ENCODE measurements at regions of chr3 and their contacts with region 1.

Region 1: DNA sequence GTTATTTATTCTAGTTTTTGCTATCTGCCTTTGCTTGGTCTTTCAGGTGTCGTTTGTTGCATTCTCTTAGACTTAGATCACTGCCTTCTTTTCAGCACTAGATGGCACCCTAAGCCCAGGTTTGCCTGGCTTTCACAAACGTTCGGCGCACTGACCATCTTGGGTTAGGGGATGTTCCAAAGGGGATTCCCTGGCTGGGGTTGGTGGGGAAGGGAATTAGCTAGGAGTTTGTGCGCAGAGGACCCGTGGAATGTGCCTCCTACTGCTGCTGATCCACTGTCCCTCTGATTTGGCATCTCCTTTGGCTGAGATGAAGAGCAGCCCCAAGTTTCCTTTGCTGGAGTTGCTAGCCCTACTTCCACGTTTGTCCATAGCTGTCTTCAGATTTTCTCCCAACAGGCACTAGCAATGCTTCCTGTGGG is 33.9 kb downstream of the PFN2 start:
- DNase-seq: no peak
- H3K4me3 ChIP-seq: no peak overlapping the region
- H3K27ac ChIP-seq: no peak overlapping the region
- H3K27me3 ChIP-seq: no peaks in the 10 kb centered on the region
- CTCF ChIP-seq: peak; percentile 84

Region 2: GRCh38 chr3:149958171-149958796 is 21.5 kb after region 1 on chr3:
- CTCF ChIA-PET with region 1: interaction called, 20 read pairs
- POLR2A ChIA-PET with region 1: no interaction called
- DNase-seq: no peak
- H3K4me3 ChIP-seq: no peak overlapping the region
- H3K27ac ChIP-seq: no peak overlapping the region
- H3K27me3 ChIP-seq: no peaks in the 10 kb centered on the region
- CTCF ChIP-seq: no peak

Region 3: DNA sequence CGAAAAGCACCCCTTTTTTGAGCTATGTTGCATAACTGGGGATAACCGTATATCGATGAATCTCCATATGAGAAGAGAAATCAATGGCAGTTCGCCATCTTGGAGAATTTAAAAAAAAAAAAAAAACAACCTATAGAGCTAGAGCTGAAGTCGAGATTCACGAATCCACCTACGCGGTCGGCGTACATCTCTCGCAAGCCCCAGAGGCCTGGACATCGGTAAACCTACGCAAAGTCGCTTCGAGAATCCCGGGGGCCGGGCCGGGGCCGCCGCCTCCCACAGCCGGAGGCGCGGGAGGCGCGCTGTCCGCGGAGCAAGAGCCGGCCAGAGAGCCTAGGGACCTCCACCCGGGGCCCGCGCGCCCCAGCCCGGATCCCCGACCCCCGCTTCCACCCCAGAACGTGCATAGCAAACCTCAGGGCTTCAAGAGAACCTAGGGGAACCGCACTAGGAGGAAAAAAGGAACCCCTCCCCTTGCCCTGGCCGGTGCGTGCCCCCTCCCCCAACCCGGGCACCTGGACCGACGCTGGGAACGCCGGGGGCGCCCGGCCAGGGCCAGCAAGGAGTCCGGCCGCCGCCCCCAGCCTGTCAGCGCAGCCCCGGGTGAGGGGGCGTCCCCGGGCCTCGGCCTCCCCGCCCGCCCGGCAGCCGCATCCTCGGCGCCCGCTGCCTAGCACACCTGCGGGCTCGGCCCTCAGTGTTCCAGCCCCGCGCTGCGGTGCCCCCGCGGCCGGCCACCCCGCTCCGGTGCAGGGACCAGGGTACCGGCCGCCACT is 33.3 kb after region 1 on chr3:
- CTCF ChIA-PET with region 1: interaction called, 36 read pairs
- POLR2A ChIA-PET with region 1: no interaction called
- DNase-seq: peak; percentile 72
- H3K4me3 ChIP-seq: peak overlapping the region; percentile 78
- H3K27ac ChIP-seq: peak overlapping the region; percentile 80
- H3K27me3 ChIP-seq: no peaks in the 10 kb centered on the region
- CTCF ChIP-seq: no peak

Region 4: DNA sequence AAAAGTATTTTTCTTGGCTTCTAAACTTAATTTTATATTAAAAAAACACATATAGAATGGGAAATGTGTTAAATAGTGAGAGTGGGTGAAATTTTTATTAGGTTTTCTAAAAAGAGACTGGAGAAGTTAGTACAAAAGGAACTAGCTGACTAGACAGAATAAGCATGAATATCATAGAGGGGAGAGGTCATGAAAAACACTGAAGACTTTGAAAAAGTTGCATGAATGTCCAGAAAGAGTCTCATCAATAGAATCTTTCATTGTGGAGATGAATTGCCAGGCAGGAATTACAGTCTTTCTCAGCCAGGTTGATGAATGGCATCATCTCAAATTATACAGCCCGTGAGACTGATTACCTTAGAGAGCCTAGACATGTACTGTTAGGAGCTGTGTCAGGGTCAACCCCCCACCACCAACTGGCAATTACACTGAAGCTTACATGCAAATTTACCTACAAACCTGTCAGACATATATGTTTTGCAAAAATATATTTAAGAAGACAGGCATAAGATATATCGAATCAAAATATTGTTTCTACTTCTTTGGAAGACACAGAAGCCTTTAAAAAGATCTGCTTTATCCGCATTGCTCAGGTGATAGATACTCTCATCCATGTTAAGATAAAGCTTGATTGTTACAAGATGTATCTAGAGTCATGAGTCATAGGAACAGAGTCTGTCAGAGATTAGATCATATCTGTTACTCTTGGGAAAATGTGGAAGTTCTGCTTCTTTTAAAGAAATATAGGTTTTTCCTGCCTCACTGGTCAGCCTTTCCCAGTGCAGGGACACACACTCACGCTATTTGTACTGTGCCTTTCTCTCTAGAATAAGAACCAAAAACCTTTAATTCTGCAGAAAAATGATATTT is 68.7 kb after region 1 on chr3:
- CTCF ChIA-PET with region 1: no interaction called
- POLR2A ChIA-PET with region 1: no interaction called
- DNase-seq: no peak
- H3K4me3 ChIP-seq: no peak overlapping the region
- H3K27ac ChIP-seq: no peak overlapping the region
- H3K27me3 ChIP-seq: no peaks in the 10 kb centered on the region
- CTCF ChIP-seq: no peak

Region 5: DNA sequence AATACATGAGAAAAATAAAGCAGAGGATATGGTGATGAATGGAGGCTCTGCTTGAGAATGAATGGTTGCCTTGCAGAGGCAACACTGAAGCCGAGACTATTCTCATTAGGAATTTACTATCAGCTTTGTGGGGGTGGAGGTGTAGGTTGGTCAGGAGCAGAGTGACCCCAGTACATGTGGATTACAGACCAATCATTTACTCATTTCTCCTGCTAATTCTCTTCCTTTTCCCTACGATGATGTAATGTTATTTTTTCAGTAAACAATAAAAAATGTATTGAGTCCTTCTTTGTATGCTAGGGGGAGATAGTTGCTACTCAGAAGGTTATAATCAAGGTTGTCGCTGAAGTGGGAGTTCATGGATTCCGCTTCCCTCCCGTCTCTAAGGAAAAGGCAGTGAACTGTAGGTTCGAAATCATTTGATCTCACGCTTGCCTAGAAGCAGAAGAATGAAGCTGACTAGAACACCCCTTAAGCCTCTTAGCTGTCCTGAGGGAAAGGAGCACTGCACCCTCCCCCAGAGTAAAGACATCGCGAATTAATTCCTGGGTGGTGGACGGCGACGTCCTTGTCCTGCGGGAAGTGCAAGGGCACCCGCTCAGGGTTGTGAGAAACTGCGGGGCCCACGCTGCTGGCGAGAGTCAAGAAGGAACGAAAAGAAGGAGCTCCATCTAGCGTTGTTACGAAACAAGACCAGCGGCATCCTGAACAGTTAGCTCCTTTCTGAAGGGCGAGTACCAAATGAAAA is 247.0 kb after region 1 on chr3:
- CTCF ChIA-PET with region 1: interaction called, 21 read pairs
- POLR2A ChIA-PET with region 1: no interaction called
- DNase-seq: peak; percentile 46
- H3K4me3 ChIP-seq: peak overlapping the region; percentile 57
- H3K27ac ChIP-seq: no peak overlapping the region
- H3K27me3 ChIP-seq: no peaks in the 10 kb centered on the region
- CTCF ChIP-seq: peak; percentile 81

Region 6: GRCh38 chr3:150216041-150216811 is 279.4 kb after region 1 on chr3:
- CTCF ChIA-PET with region 1: interaction called, 38 read pairs
- POLR2A ChIA-PET with region 1: no interaction called
- DNase-seq: no peak
- H3K4me3 ChIP-seq: no peak overlapping the region; the same call in 1 of the 2 replicates
- H3K27ac ChIP-seq: peak overlapping the region; percentile 54
- H3K27me3 ChIP-seq: peaks cover 4% of the 10 kb centered on the region
- CTCF ChIP-seq: peak; percentile 19; the same call in 1 of the 2 replicates

Region 7: GRCh38 chr3:150227839-150228238 is 291.0 kb after region 1 on chr3:
- CTCF ChIA-PET with region 1: interaction called, 16 read pairs
- POLR2A ChIA-PET with region 1: no interaction called
- DNase-seq: no peak
- H3K4me3 ChIP-seq: no peak overlapping the region
- H3K27ac ChIP-seq: no peak overlapping the region
- H3K27me3 ChIP-seq: no peaks in the 10 kb centered on the region
- CTCF ChIP-seq: peak; percentile 85

Measured in AG04450 (cell line).